MCF 10A (cell line): ENCODE measurements at regions of chr7 and their contacts with region 1.

Region 1: DNA sequence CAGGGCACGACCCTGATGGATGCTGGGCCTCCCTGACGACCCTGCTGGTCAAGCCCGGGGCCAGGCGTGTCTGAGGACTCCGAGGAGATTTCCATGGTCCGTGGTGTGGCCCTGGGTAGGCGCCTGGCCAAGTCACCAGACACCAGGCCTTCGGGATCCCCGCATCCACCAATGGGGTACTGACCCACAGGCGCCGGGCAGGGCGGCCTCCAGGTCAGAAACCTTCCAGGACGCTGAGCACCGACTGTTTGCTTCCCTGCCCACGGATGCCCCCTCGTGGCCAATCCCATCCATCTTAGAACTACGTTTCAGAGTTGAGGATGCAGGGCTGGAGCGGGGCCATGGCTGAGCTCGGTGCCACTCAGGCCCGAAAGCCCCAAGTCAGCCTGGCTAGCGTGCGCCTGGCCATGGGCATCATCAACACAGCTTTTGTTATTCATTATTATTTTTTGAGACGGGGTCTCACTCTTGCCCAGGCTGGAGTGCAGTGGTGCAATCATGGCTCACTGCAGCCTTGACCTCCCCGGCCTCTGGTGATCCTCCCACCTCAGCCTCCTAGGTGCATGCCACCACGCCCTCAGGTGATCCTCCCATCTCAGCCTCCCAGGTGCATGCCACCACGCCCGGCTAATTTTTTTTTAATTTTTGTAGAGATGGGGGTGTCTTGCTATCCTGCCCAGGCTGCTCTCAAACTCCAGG is 7.1 kb upstream of the AMZ1 start:
- DNase-seq: peak; percentile 77
- H3K4me3 Mint-ChIP-seq: no peak overlapping the region
- H3K27ac Mint-ChIP-seq: no peak overlapping the region
- H3K4me1 Mint-ChIP-seq: no peaks in the 10 kb centered on the region
- H3K27me3 Mint-ChIP-seq: peaks cover 41% of the 10 kb centered on the region
- CTCF ChIP-seq: peak; percentile 69

Region 2: GRCh38 chr7:2477447-2478398 is 203.2 kb before region 1 on chr7:
- CTCF ChIA-PET with region 1: interaction called, 4 read pairs
- POLR2A ChIA-PET with region 1: no interaction called
- intact Hi-C with region 1: loop called (anchors 1 kb)
- DNase-seq: peak; percentile 61
- H3K4me3 Mint-ChIP-seq: no peak overlapping the region
- H3K27ac Mint-ChIP-seq: peak overlapping the region; percentile 27
- H3K4me1 Mint-ChIP-seq: no peaks in the 10 kb centered on the region
- H3K27me3 Mint-ChIP-seq: no peaks in the 10 kb centered on the region
- CTCF ChIP-seq: peak; percentile 78

Region 3: DNA sequence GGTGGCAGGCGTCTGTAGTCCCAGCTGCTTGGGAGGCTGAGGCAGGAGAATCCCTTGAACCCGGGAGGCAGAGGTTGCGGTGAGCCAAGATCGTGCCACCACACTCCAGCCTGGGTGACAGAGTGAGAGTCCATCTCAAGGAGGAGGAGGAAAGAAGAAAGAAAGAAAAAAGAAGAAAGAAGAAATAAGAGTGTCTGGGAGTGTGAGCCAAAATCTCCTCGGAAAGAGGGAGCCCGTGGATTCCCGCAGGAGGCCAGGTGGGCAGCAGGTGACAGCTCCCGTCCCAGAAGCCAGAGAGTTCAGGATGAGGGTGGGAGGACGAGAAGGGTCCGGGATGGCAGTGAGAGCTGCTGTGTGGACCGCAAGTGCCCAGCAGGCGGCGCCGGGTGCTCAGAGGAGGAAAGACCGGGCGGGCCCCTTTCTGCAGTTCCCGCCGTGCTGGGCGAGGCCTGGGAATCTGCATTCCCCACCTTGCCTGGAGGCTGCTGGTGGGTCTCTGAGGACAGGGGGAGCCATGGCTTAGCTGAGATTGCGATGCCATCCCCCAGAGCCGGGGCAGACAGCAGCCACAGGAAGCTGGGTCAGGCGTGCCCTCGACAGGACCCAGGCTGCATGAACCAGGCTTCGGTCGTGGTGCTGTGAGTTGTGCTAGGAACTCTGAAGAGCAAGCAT is 10.1 kb before region 1 on chr7:
- CTCF ChIA-PET with region 1: interaction called, 16 read pairs
- POLR2A ChIA-PET with region 1: no interaction called
- intact Hi-C with region 1: no loop called
- DNase-seq: peak; percentile 61
- H3K4me3 Mint-ChIP-seq: no peak overlapping the region
- H3K27ac Mint-ChIP-seq: no peak overlapping the region
- H3K4me1 Mint-ChIP-seq: no peaks in the 10 kb centered on the region
- H3K27me3 Mint-ChIP-seq: peaks cover 36% of the 10 kb centered on the region
- CTCF ChIP-seq: peak; percentile 91

Region 4: DNA sequence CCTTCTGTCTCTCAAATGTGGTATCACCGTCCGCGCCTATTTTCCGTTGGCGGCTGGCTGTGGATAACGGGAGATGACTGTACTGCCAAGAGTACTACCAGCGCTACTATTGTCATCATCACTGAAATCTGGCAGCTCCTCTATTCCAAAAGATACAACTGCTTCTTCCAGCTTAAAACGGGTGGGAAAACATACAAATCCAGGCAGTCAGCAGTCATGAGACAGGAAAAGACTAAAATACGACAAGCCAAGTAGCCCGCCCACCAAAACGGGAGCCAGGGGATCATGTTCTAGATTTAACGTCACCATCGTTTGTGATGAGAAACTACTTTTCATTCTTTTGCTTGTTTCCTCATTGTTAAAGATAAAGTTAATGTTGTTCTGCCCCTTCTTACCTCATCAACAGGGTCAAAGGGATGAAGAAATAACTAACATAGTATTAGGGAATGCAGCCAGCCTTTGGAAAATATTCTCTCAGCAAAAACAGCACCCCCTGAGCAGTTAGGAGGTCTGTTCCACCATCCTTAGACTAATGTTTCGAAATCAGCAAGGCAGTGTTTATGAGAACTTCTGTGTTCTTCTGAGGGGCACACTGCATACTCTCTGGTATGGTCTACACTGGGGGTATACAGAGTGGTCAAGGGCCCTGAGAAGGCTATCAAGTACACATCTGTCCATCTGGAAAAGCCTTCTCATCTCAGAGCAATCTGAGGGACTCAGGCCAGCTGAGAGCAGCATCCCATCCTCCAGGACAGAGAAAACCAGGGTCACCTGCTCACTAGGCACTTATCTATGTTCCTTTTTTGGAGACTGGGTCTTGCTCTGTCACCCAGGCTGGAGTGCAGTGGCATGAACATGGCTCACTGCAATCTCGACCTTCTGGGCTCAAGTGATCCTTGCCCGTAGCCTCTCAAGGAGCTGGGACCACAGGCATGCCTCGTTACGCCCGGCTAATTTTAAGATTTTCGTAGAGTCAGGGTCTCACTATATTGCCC is 115.7 kb after region 1 on chr7:
- CTCF ChIA-PET with region 1: no interaction called
- POLR2A ChIA-PET with region 1: no interaction called
- intact Hi-C with region 1: no loop called
- DNase-seq: no peak
- H3K4me3 Mint-ChIP-seq: no peak overlapping the region
- H3K27ac Mint-ChIP-seq: no peak overlapping the region
- H3K4me1 Mint-ChIP-seq: peaks cover 7% of the 10 kb centered on the region
- H3K27me3 Mint-ChIP-seq: no peaks in the 10 kb centered on the region
- CTCF ChIP-seq: no peak